ENCODE measurements at regions of chrX and their contacts with region 1.

Region 1: GRCh38 chrX:14029425-14030173 is at the start of gene GEMIN8:
- DNase-seq: peak; percentile 87
- H3K4me3 ChIP-seq: peak within 1 kb of the TSS; percentile 64 to 72
- H3K27ac ChIP-seq: peak within 1 kb of the TSS; percentile 70 to 80
- H3K4me1 ChIP-seq: no peaks in the 10 kb centered on the region
- H3K27me3 ChIP-seq: no peaks in the 10 kb centered on the region
- CTCF ChIP-seq: no peak
- POLR2A ChIP-seq: no peak
- total RNA-seq, gene GEMIN8: 19.9 to 23.6 TPM

Region 2: GRCh38 chrX:13506574-13506973 is 523.0 kb before region 1 on chrX:
- intact Hi-C with region 1: loop called (anchors 10 kb)
- DNase-seq: peak; percentile 22
- H3K4me3 ChIP-seq: no peak overlapping the region
- H3K27ac ChIP-seq: no peak overlapping the region
- H3K4me1 ChIP-seq: no peaks in the 10 kb centered on the region
- H3K27me3 ChIP-seq: no peaks in the 10 kb centered on the region
- CTCF ChIP-seq: peak; percentile 63 to 77 (median 70)
- POLR2A ChIP-seq: no peak

Region 3: DNA sequence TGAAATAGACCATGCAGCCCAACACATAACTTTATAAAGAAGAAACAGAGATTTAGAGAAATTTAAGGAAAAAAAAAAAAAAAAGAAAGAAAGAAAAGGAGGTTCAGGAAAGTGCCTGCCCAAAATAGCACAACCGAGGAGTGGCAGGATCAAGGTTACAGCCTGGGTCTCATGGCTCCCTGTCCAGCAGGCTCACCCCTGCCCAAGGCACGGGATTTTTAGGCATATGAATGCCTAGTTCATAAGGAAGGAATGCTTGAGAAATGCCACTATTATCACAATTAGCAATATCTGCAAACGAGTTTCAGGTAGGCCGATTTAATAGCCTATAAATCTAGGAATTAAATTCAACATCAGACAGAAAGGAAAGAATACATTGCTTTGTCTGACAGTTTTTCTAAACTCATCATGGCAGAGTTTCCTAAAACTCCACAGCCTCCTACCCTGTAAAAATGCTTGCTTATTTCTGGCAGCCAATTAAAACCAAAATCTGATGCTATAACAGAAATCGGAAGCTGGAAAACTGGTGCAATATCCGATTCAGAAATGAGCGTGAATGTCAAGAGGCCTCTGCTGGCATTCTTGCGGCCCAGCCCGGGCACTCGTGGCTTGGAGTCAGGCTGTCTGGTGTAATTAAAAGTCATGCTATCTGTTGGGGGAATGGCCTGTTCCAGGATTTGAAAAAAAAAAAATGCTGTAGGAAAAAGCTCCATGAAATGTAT is 63.4 kb before region 1 on chrX:
- intact Hi-C with region 1: no loop called
- DNase-seq: no peak
- H3K4me3 ChIP-seq: no peak overlapping the region
- H3K27ac ChIP-seq: no peak overlapping the region
- H3K4me1 ChIP-seq: no peaks in the 10 kb centered on the region
- H3K27me3 ChIP-seq: no peaks in the 10 kb centered on the region
- CTCF ChIP-seq: no peak
- POLR2A ChIP-seq: no peak